Motor neuron (in vitro differentiated cells): ENCODE measurements at regions of chr20 and their contacts with region 1.

Region 1: DNA sequence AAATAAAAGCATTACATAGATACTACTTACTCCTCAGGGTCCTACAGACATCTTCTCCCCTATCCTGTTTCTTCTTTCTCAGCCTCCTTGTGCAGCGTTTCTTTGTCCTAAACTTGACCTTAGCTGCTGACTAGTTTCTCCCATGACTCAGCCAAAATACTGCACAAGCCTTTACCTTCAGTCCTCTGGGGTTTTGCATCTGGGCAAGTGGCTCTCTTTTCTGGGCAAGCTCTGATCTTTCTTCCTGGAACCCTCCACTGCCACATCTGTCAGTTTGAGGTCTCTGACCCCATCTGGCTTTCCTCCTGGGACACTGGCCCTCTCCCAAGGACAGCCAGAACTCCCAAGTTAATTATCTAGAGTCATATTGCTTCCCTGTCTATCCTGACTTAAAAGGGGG is 838.4 kb downstream of the DHX35 start:
- ATAC-seq: peak in 2 of 8 experiments; percentile 85 to 91
- H3K4me3 ChIP-seq: no peak overlapping the region
- H3K27ac ChIP-seq: no peak overlapping the region
- H3K4me1 ChIP-seq: no peaks in the 10 kb centered on the region

Region 2: DNA sequence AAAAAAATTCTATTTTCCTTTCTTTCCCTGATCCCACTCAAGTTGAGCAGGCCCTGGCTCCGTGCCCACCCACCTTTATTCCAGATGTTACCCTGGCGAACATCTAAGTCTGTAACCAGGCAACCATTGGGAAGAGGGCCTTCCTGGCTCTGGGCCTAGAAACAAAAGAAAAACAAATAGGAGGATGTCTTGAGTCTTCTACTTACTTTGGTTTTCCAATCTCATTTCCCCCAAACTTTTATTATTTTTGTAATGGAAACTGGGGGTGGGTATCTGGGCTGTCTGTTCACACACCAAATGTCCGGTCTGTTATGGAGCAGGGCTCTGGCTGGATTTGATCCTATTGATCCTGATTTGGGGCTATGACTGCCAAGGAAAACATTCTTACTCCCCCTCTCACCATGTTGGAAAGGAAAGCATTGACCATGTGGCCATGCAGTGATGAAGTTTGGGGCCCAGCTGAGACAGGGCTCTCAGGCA is 94.3 kb before region 1 on chr20:
- in situ Hi-C with region 1: loop called in 1 of 9 experiments (anchors 25 kb)
- ATAC-seq: no peak
- H3K4me3 ChIP-seq: no peak overlapping the region
- H3K27ac ChIP-seq: no peak overlapping the region
- H3K4me1 ChIP-seq: peaks cover 0 to 2% of the 10 kb centered on the region in 2 donors

Region 3: DNA sequence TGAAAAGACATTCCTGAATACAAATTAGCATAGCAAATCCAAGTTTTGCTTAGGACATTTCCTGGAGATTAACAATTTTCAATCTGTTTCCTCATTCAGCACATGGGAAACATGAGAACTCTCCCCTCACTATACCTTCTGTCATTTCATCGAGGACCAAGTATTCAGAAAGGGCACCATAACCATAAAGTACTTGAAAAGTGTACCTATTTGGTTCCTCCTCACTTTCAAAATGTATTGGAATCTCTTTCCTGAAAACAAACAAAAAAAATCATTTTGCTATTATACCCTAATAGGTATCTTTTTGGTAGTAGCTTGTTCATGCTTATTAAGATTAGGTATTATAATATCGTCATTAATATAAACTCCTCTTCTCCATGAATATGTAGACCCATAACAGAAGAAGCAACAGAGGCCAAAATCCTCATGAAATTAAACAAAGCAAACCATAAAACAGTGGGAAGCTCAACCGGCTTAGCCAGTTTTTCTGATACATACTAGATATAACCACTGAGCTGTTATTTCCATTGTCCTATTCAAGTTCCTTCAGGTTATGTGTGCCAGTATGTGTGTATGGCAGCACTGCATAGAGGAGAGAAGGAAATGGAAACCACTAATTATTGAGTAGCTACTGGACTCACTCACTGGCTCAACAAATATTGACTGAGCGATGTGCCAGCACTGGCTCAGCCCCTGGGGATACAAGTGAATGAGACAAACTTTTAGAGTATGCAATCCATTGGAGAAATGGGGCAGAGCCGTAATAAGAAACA is 614.5 kb after region 1 on chr20:
- in situ Hi-C with region 1: no loop called
- ATAC-seq: peak in 1 of 8 experiments; percentile 50
- H3K4me3 ChIP-seq: no peak overlapping the region
- H3K27ac ChIP-seq: no peak overlapping the region
- H3K4me1 ChIP-seq: no peaks in the 10 kb centered on the region